Psoas muscle (tissue), 8 donors: ENCODE measurements at regions of chr5 and their contacts with region 1.

Region 1: GRCh38 chr5:132883261-132883834 is 9.9 kb downstream of the LEAP2 start:
- DNase-seq: no peak
- ATAC-seq: peak; percentile 74 to 86 (median 82)
- H3K4me3 ChIP-seq: no peak overlapping the region
- H3K27ac ChIP-seq: no peak overlapping the region
- H3K4me1 ChIP-seq: peaks cover 3% of the 10 kb centered on the region
- H3K27me3 ChIP-seq: no peaks in the 10 kb centered on the region
- CTCF ChIP-seq: peak; percentile 66

Region 2: GRCh38 chr5:132607095-132607494 is 276.3 kb before region 1 on chr5:
- intact Hi-C with region 1: loop called in 1 of 2 experiments (anchors 10 kb)
- DNase-seq: no peak
- ATAC-seq: no peak
- H3K4me3 ChIP-seq: no peak overlapping the region
- H3K27ac ChIP-seq: no peak overlapping the region
- H3K4me1 ChIP-seq: no peaks in the 10 kb centered on the region
- H3K27me3 ChIP-seq: no peaks in the 10 kb centered on the region
- CTCF ChIP-seq: no peak

Region 3: GRCh38 chr5:132829742-132830435 is 53.5 kb before region 1 on chr5:
- intact Hi-C with region 1: loop called (anchors 5 kb)
- DNase-seq: peak; percentile 79 to 85
- ATAC-seq: peak; percentile 86 to 97 (median 92)
- H3K4me3 ChIP-seq: peak overlapping the region; percentile 82
- H3K27ac ChIP-seq: peak overlapping the region; percentile 76
- H3K4me1 ChIP-seq: peaks cover 5% of the 10 kb centered on the region
- H3K27me3 ChIP-seq: peaks cover 0 to 35% (median 5%) of the 10 kb centered on the region in 3 donors
- CTCF ChIP-seq: peak; percentile 86

Region 4: DNA sequence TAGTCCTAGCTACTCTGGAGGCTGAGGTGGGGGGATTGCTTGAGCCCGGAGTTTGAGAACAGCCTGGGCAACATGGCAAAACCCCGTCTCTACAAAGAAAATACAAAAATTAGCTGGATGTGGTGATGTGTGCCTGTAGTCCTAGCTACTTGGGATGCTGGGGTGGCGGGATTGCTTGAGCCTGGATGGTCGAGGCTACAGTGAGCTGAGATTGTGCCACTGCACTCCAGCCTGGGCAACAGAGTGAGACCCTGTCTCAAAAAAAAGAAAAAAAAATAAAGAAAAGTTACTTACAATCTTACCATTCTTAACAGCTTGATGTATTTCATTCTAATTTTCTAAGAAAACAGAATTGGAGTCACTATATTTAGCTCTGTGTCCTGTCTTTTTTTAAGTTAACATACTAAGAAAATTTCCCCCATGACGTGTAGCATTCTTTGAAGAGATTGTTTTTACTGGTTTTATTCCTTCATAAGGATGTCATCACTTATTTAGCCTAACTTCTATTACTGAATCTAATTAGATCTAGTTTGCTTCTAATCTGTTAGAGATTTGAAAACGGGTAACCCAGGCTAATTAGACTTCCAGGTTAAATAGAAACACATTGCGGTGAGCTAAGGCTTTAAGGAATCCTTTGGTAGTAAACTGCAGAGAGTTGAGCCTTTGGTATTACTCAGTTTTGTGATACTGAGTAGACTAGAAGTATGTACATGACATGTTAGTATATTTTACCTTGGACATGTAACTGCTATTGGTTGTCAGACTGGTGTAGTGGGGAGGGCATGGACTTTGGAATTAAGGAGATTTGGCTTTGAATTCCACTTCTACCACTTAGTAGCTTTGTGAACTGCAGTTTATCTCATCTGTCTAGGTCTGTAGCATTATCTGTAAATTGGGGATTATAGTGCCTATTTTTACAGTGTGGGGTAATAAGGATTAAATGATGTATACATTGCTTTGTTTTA is 192.5 kb after region 1 on chr5:
- intact Hi-C with region 1: loop called in 1 of 2 experiments (anchors 10 kb)
- DNase-seq: no peak
- ATAC-seq: no peak
- H3K4me3 ChIP-seq: no peak overlapping the region
- H3K27ac ChIP-seq: no peak overlapping the region
- H3K4me1 ChIP-seq: no peaks in the 10 kb centered on the region
- H3K27me3 ChIP-seq: no peaks in the 10 kb centered on the region
- CTCF ChIP-seq: no peak

Region 5: GRCh38 chr5:133247881-133248624 is 364.7 kb after region 1 on chr5:
- intact Hi-C with region 1: loop called in 1 of 2 experiments (anchors 5 kb)
- DNase-seq: peak; percentile 55 to 80
- ATAC-seq: peak; percentile 93 to 96 (median 94)
- H3K4me3 ChIP-seq: no peak overlapping the region
- H3K27ac ChIP-seq: peak overlapping the region; percentile 71
- H3K4me1 ChIP-seq: peaks cover 27% of the 10 kb centered on the region
- H3K27me3 ChIP-seq: no peaks in the 10 kb centered on the region
- CTCF ChIP-seq: peak; percentile 62